ENCODE measurements at regions of chr11 and their contacts with region 1.

Region 1: GRCh38 chr11:121383716-121384115 is 68.4 kb upstream of the SORL1 start:
- DNase-seq: peak in 3 of 10 donors; percentile 32 to 64 (median 44)
- H3K4me3 ChIP-seq: no peak overlapping the region
- H3K27ac ChIP-seq: peak overlapping the region in 50 of 59 donors; percentile 9 to 85 (median 61)
- H3K27me3 ChIP-seq: no peaks in the 10 kb centered on the region
- CTCF ChIP-seq: no peak

Region 2: DNA sequence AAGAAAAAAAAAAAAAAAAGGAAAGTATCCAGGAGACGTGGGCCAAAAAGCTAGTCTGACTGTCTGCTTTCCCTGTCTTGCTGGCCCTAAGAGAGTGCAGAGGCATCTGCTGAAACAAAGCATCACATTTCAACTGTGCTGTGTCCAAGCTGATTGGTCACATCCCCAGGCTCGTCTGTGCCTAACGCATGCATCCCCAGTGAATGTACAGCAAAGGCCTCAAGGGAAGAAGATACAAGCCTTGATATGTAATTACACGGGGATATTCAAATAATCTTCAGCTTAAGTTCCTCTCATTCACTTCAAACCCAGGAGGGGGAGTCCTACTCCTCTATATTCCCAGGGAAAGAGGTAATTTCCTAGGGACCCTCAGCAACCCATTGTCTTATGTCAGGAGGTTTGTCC is 63.0 kb after region 1 on chr11:
- intact Hi-C with region 1: loop called in 1 of 2 experiments (anchors 5 kb)
- DNase-seq: peak in 1 of 10 donors; percentile 35
- H3K4me3 ChIP-seq: no peak overlapping the region
- H3K27ac ChIP-seq: peak overlapping the region in 32 of 59 donors; percentile 2 to 95 (median 42)
- H3K27me3 ChIP-seq: no peaks in the 10 kb centered on the region
- CTCF ChIP-seq: peak in 35 of 56 donors; percentile 10 to 52 (median 28)

Region 3: DNA sequence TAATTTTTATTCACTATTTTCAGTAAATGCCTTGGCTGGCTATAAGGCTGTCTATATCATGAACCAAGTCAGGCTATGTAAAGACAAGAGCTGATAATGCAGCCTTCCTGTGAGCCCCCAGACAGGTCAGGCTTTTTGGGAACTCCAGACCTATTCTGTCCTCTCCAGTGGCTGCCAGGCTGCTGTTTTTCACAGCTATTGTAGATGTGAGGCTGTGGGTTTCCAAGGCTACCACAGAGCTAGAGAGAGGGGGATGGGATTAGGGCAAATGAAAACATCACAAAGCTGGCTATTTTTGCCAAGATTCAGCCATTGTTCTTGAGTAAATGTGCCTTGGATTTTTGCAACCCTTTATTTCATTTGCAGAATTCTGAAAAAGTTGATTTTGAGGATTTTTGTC is 124.7 kb after region 1 on chr11:
- intact Hi-C with region 1: no loop called
- DNase-seq: peak in 1 of 10 donors; percentile 37
- H3K4me3 ChIP-seq: peak overlapping the region in 1 of 59 donors; percentile 22
- H3K27ac ChIP-seq: peak overlapping the region in 52 of 59 donors; percentile 0 to 91 (median 59)
- H3K27me3 ChIP-seq: no peaks in the 10 kb centered on the region
- CTCF ChIP-seq: no peak